HCT116 (cell line): ENCODE measurements at regions of chr10 and their contacts with region 1.

Region 1: GRCh38 chr10:5977471-5978229 is at the start of gene IL15RA:
- DNase-seq: peak; percentile 39
- ATAC-seq: peak; percentile 79
- H3K4me3 ChIP-seq: peak within 1 kb of the TSS; percentile 66 to 83
- H3K27ac ChIP-seq: peak within 1 kb of the TSS; percentile 85
- H3K4me1 ChIP-seq: peaks cover 4 to 18% of the 10 kb centered on the region in 2 experiments
- H3K27me3 ChIP-seq: no peaks in the 10 kb centered on the region
- CTCF ChIP-seq: 0 out of 6 replicates have a peak, but pooled peaks of 1 of the 3 experiments have one; percentile 11
- POLR2A ChIP-seq: no peak
- RAD21 ChIP-seq: no peak
- total RNA-seq, gene IL15RA: 10.5 TPM

Region 2: DNA sequence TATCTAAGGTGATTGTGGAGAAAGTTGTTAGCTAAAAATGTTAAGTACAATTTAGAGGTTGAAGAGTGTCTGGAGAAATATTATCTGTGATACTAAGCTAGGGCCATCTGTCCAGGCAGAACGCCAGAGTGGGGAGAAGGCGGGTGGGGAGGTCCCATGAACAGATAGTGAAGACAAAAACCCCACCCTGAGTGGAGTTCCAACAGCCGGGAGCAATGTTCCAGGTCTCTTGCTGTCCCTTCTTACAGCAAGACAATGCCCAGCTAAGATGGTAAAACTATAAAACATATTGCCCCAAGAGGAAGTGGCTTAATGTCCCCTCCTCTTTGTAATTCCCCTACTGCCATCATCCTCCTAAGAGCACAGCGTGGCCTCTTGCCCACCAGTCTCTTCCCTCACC is 10.1 kb after region 1 on chr10:
- CTCF ChIA-PET with region 1: no interaction called
- POLR2A ChIA-PET with region 1: no interaction called
- RAD21 ChIA-PET with region 1: no interaction called
- intact Hi-C with region 1: no loop called
- DNase-seq: no peak
- ATAC-seq: no peak
- H3K4me3 ChIP-seq: no peak overlapping the region
- H3K27ac ChIP-seq: no peak overlapping the region
- H3K4me1 ChIP-seq: no peaks in the 10 kb centered on the region
- H3K27me3 ChIP-seq: no peaks in the 10 kb centered on the region
- CTCF ChIP-seq: no peak
- POLR2A ChIP-seq: no peak
- RAD21 ChIP-seq: no peak

Region 3: DNA sequence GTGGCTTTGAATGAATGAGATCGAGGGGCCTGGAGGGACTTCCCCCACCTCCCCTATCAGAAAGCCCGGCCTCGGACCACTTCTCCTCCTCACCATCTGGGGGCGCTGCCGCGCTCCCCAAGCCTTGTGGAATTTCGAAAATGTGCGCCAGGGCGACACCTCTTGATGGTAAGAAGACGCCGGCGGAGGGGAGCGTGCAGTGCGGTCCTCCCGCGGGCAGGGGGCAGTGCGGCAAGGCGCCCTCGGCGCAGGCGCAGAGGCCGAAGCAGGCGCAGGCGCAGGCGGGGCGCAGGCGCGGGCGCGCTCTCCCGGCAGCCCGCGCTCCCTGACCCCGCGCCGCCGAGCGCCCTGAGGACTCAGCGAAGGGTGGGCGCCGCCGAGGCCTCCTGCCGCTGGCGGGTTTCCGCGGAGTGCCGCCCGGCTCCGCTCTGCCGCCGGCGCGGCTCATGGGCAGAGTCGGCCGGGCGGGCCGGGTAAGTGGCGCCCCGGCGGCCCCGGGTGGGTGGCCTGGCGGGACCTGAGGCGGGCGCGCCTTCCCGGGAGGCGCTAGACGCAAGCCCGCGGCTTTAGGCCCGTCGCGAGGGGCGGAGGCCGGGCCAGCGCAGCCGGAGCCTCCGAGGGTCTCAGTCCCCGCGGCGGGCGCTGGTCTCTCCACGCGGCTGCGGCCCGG is 111.2 kb after region 1 on chr10 and contains the start of gene RBM17:
- CTCF ChIA-PET with region 1: no interaction called
- POLR2A ChIA-PET with region 1: no interaction called
- RAD21 ChIA-PET with region 1: no interaction called
- intact Hi-C with region 1: loop called (anchors 10 kb)
- DNase-seq: peak; percentile 94
- ATAC-seq: peak; percentile 88
- H3K4me3 ChIP-seq: peak within 1 kb of the TSS; percentile 89 to 97
- H3K27ac ChIP-seq: peak within 1 kb of the TSS; percentile 78
- H3K4me1 ChIP-seq: peaks cover 5 to 15% of the 10 kb centered on the region in 2 experiments; a peak in 3 of 4 replicates
- H3K27me3 ChIP-seq: peaks cover 2% of the 10 kb centered on the region; the same call in 1 of the 2 replicates
- CTCF ChIP-seq: peak; percentile 100
- POLR2A ChIP-seq: peak; percentile 68
- RAD21 ChIP-seq: peak; percentile 83
- total RNA-seq, gene RBM17: 129 TPM

Region 4: DNA sequence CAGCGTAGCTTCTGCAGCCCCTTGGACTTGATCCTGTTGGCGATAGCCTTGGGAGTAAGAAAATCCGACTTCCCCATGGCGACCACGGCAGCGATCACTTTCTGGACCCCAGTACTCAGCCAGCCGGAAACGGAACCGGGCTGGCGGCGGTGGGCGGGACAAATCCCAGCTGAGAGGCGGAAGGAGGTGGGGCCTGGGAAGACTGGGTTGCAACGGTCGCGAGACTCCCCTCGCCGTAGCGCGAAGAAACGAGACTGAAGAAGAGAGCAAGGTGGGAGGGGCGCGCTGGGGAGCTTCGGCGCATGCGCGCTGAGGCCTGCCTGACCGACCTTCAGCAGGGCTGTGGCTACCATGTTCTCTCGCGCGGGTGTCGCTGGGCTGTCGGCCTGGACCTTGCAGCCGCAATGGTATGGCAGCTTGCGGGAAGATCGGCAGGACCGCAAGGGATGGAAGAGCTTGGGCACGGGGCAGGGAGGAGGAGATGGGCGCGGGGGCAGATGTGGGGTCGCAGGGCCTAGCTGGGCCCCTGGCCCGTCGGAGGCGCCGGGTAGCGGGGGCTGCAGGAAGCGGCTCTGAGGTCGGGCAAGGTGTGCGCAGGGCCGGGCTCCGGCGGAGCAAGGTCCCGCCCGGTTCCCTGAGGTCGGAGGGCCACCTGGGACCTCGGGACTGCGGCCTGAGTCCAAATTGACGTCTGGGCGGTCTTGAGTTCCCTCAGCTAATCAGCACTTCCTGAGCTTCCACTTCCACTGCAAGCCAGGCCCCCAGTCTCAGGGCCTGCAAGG is 1810.4 kb after region 1 on chr10 and contains the starts of genes ATP5F1C and KIN:
- CTCF ChIA-PET with region 1: no interaction called
- POLR2A ChIA-PET with region 1: no interaction called
- RAD21 ChIA-PET with region 1: no interaction called
- intact Hi-C with region 1: loop called (anchors 5 kb)
- DNase-seq: peak; percentile 86
- ATAC-seq: peak; percentile 95
- H3K4me3 ChIP-seq: peak within 1 kb of the TSS; percentile 90 to 92
- H3K27ac ChIP-seq: peak within 1 kb of the TSS; percentile 75
- H3K4me1 ChIP-seq: peaks cover 16 to 33% of the 10 kb centered on the region in 2 experiments; a peak in 3 of 4 replicates
- H3K27me3 ChIP-seq: no peaks in the 10 kb centered on the region
- CTCF ChIP-seq: no peak
- POLR2A ChIP-seq: peak; percentile 88
- RAD21 ChIP-seq: no peak
- total RNA-seq, gene ATP5F1C: 292 TPM
- total RNA-seq, gene KIN: 13.6 TPM